Common myeloid progenitor, CD34-positive (primary cell): ENCODE measurements at regions of chr1 and their contacts with region 1.

Region 1: DNA sequence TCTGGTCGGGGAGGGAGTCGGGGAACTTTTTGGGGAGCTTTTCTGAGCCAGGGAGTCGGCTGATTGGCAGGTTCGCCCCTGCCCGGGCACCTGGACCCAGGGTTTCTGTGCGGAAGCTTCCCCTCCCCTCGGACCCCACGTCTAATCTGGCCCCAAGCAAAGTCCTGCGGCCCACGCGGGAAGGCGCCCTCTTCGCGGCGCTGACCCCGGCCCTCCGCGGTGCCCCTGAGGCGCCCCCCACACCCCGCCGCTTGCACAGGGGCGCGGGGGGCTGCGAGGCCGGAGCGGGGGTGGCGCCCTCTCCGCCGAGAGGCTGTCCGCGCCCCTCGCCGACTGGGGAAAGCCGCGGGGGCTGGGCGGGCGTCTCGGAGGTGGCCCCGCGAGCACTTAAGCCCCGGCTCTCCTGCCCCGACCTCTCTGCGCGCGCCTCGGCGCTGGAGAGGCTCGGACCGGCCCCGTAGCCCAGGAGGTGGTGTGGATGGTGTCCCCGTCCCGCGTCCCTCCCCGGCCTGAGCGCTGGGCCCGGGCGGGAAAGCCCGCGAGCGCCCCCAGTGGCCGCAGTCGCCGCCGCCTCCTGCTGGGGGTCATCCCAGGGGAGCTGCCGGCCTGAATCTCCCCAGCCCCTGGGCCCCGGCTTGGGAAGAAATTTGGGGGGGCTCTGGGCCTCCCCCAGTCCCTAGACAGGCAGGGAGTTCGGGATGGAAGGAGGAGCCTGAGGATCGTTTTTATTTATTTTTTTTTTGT is 1.7 kb upstream of the HES4 start:
- DNase-seq: peak in 1 of 3 donors; percentile 43
- H3K4me3 ChIP-seq: peak overlapping the region in 4 of 7 experiments; percentile 1 to 66 (median 31)
- H3K27ac ChIP-seq: peak overlapping the region in 1 of 2 experiments; percentile 49
- H3K4me1 ChIP-seq: peaks cover 0 to 65% (median 63%) of the 10 kb centered on the region in 4 experiments
- H3K27me3 ChIP-seq: peaks cover 0 to 70% (median 14%) of the 10 kb centered on the region in 5 experiments

Region 2: DNA sequence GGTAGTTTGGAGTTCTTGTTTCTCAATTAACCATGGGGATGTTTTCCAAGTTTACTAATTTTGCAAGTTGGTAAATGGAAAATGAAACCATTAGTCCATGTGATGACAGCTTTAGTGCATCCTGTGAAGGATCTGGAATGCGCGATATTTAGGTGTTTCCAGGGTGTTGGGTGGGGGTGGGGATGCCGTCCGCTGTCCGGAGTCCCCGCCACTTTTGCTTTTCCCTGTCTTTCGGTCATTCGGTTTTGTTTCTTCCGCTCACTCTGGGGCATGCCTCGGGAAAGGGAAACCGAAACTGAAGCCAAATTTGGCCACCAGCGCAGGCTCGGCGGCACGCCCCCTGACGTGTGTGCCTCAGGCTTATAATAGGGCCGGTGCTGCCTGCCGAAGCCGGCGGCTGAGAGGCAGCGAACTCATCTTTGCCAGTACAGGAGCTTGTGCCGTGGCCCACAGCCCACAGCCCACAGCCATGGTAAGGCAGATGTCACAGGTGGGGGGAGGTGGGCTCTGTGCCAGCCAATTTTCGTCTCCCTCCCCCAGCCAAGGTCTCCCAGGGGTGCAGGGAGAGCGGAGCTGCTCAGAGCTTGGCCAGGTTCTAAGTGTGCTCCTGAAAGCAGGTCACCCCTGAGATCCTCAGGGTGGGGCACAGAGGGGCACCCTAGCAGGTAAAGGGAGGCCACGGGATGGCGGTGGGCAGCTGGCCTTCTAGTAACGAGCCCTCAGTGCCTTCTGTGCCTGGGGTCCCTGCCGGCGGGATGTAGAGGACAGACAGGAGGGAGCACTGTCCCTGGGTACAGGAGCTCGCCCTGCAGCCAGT is 11.7 kb after region 1 on chr1 and contains the start of gene ISG15:
- CTCF ChIA-PET with region 1: interaction called, 19 read pairs
- POLR2A ChIA-PET with region 1: interaction called, 6 read pairs
- DNase-seq: peak; percentile 78 to 89 (median 89)
- H3K4me3 ChIP-seq: peak within 1 kb of the TSS; percentile 43 to 99 (median 90)
- H3K27ac ChIP-seq: peak within 1 kb of the TSS; percentile 52 to 81
- H3K4me1 ChIP-seq: peaks cover 3 to 28% (median 22%) of the 10 kb centered on the region in 4 experiments
- H3K27me3 ChIP-seq: no peaks in the 10 kb centered on the region